ENCODE measurements at regions of chr1 and their contacts with region 1.

Region 1: GRCh38 chr1:220550811-220551399 is 23.0 kb downstream of the MARK1 start:
- DNase-seq: no peak
- H3K4me3 ChIP-seq: no peak overlapping the region
- H3K27ac ChIP-seq: no peak overlapping the region
- H3K4me1 ChIP-seq: peaks cover 0 to under 1% (median 0%) of the 10 kb centered on the region in 4 experiments; a peak in 2 of 7 replicates
- H3K27me3 ChIP-seq: no peaks in the 10 kb centered on the region
- CTCF ChIP-seq: no peak
- EP300 ChIP-seq: no peak
- POLR2A ChIP-seq: no peak
- RAD21 ChIP-seq: no peak

Region 2: DNA sequence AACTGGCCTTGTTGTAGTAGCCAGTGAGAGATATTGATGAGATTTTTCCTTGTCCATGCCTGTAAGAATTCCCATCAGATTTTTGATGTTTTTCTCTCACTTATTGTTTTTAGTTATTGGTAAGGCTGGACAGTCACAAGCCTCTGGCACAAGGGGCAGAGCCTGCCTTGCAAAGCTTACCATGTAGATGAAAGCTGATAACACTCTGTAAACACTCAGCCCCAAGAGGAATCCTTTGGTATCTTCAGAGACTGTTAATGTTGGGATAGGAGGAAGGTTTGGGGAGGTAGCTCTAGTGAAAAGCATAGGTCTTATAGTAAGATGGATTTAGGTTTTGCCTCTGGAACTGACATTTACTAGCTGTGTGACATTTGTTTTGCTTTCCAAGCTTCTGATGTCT is 14.8 kb after region 1 on chr1:
- CTCF ChIA-PET with region 1: interaction called, 13 read pairs
- POLR2A ChIA-PET with region 1: no interaction called
- DNase-seq: no peak
- H3K4me3 ChIP-seq: no peak overlapping the region
- H3K27ac ChIP-seq: no peak overlapping the region
- H3K4me1 ChIP-seq: peaks cover 0 to 5% (median 0%) of the 10 kb centered on the region in 4 experiments; a peak in 1 of 7 replicates
- H3K27me3 ChIP-seq: no peaks in the 10 kb centered on the region
- CTCF ChIP-seq: no peak
- EP300 ChIP-seq: no peak
- POLR2A ChIP-seq: no peak
- RAD21 ChIP-seq: no peak